ENCODE measurements at regions of chr2 and their contacts with region 1.

Region 1: DNA sequence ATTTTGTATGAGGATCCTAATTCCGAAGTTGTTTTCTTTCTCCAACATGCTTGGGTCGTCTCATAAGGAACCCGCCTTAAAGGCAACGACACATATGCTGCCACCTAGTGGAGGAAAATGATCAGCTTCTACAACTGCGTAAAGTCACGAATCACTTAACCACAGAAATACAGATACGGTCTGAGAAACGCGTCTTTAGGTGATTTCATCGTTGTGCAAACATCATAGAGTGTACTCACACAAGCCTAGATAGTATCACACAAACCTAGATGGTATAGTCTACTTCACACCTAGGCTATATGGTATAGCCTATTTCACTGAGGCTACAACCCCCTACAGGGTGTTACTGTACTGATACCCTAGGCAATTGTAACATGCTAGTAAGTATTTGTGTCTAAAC is 13.1 kb downstream of the GNLY start:
- DNase-seq: peak; percentile 90
- ATAC-seq: peak; percentile 71
- H3K4me3 ChIP-seq: no peak overlapping the region
- H3K4me3 Mint-ChIP-seq: peak overlapping the region; percentile 40
- H3K27ac ChIP-seq: no peak overlapping the region
- H3K27ac Mint-ChIP-seq: peak overlapping the region; percentile 38
- H3K4me1 ChIP-seq: peaks cover 39 to 44% of the 10 kb centered on the region in 2 donors
- H3K4me1 Mint-ChIP-seq: peaks cover 39% of the 10 kb centered on the region
- H3K27me3 ChIP-seq: peaks cover 0 to 9% (median 0%) of the 10 kb centered on the region in 4 experiments
- H3K27me3 Mint-ChIP-seq: peaks cover 16% of the 10 kb centered on the region
- CTCF ChIP-seq: peak; percentile 94

Region 2: DNA sequence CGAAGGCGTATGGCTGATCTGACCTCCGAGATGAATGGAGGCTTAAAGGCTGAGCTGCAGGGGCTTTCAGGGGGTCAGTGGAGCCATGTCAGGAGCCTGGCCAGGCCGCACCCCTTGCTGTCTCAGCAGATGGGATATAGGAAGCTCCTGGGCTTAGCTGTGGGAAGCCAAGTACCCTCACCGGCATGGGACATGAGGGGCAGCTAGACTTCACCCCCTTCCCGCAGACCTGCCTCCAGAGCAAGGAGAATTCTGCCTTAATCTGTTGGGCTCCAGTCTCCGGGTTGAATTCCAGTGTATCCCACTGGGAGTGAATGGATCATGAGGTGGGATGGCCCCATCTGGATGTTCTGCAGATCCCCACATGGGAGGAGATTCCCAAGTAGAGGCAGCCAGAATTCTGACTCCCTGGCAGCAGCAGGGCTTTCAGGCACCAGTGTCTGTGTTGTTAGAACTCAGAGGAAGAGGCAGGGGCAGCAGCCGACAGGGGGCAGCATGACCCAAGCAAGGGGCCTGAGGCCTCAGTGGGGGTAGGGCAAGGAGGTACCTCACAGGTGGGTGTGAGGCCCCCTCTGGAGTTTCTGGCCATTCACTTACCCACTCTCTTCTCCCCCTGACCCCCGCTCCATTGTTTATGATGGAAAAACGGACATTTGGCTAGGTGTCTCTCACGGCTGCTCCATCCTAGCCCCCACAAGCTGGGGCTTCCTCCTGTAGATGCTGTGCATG is 316.2 kb before region 1 on chr2:
- CTCF ChIA-PET with region 1: no interaction called
- POLR2A ChIA-PET with region 1: no interaction called
- intact Hi-C with region 1: loop called (anchors 1 kb)
- DNase-seq: peak; percentile 80
- ATAC-seq: peak; percentile 25
- H3K4me3 ChIP-seq: no peak overlapping the region
- H3K4me3 Mint-ChIP-seq: peak overlapping the region; percentile 15
- H3K27ac ChIP-seq: peak overlapping the region; percentile 68 to 81
- H3K27ac Mint-ChIP-seq: peak overlapping the region; percentile 71
- H3K4me1 ChIP-seq: peaks cover 25 to 26% of the 10 kb centered on the region in 2 donors
- H3K4me1 Mint-ChIP-seq: peaks cover 31% of the 10 kb centered on the region
- H3K27me3 ChIP-seq: no peaks in the 10 kb centered on the region
- H3K27me3 Mint-ChIP-seq: no peaks in the 10 kb centered on the region
- CTCF ChIP-seq: peak; percentile 81

Region 3: DNA sequence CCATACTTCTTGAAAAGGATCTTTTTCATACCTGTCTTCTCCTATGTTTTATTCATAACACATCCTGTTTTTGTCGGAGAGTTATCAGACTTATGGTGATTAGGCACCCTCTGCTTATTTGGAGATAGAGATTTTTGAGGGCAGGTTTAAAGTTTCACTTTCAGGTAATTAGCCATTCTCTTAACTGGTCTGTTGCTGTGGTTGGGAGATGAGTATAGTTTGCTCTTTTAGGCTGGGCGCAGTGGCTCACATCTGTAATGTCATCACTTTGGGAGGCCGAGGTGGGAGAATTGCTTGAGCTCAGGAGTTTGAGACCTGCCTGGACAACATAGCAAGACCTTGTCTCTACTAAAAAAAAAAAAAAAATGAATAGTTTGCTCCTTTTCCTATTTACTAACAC is 64.6 kb before region 1 on chr2:
- CTCF ChIA-PET with region 1: interaction called, 134 read pairs
- POLR2A ChIA-PET with region 1: no interaction called
- intact Hi-C with region 1: no loop called
- DNase-seq: no peak
- ATAC-seq: no peak
- H3K4me3 ChIP-seq: no peak overlapping the region
- H3K4me3 Mint-ChIP-seq: no peak overlapping the region
- H3K27ac ChIP-seq: no peak overlapping the region
- H3K27ac Mint-ChIP-seq: no peak overlapping the region
- H3K4me1 ChIP-seq: peaks cover 6 to 9% of the 10 kb centered on the region in 2 donors
- H3K4me1 Mint-ChIP-seq: peaks cover 5% of the 10 kb centered on the region
- H3K27me3 ChIP-seq: no peaks in the 10 kb centered on the region
- H3K27me3 Mint-ChIP-seq: no peaks in the 10 kb centered on the region
- CTCF ChIP-seq: no peak

Region 4: GRCh38 chr2:85678794-85679672 is 28.3 kb before region 1 on chr2:
- CTCF ChIA-PET with region 1: interaction called, 75 read pairs
- POLR2A ChIA-PET with region 1: no interaction called
- intact Hi-C with region 1: loop called (anchors 1 kb)
- DNase-seq: peak; percentile 82
- ATAC-seq: peak; percentile 99
- H3K4me3 ChIP-seq: no peak overlapping the region
- H3K4me3 Mint-ChIP-seq: peak overlapping the region; percentile 18
- H3K27ac ChIP-seq: no peak overlapping the region
- H3K27ac Mint-ChIP-seq: no peak overlapping the region
- H3K4me1 ChIP-seq: peaks cover 0 to 7% of the 10 kb centered on the region in 2 donors
- H3K4me1 Mint-ChIP-seq: peaks cover 7% of the 10 kb centered on the region
- H3K27me3 ChIP-seq: peaks cover 0 to 17% (median 6%) of the 10 kb centered on the region in 4 experiments
- H3K27me3 Mint-ChIP-seq: peaks cover 24% of the 10 kb centered on the region
- CTCF ChIP-seq: peak; percentile 99

Region 5: DNA sequence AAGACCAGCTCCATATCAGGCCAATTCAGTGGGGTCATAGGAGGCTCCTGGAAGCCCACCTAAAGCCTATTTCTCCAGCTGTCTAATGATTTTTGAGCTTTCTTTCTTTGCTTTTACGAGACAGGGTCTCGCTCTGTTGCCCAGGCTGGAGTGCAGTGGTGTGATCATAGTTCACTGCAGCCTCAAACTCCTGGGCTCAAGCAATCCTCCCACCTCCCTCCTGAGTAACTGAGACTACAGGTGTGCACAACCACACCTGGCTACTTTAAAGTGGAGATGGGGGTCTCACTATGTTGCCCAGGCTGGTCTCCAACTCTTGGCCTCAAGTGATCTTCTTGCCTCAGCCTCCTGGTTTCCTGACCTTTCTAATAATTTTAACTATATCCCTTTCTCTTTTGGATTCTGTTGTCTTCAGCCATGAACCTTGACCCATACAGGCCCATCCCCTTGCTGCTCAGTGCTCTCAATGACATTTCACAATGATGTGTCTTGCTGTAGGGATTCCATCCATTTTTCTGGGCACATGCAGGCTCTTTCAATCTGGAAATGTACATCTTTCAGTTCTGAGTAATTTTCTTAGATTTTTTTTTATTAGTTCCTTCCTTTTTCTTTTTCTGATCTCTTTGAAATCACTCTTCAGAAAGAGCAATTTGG is 16.5 kb after region 1 on chr2:
- CTCF ChIA-PET with region 1: interaction called, 15 read pairs
- POLR2A ChIA-PET with region 1: no interaction called
- intact Hi-C with region 1: no loop called
- DNase-seq: no peak
- ATAC-seq: no peak
- H3K4me3 ChIP-seq: no peak overlapping the region
- H3K4me3 Mint-ChIP-seq: no peak overlapping the region
- H3K27ac ChIP-seq: no peak overlapping the region
- H3K27ac Mint-ChIP-seq: no peak overlapping the region
- H3K4me1 ChIP-seq: peaks cover 2% of the 10 kb centered on the region in 2 donors
- H3K4me1 Mint-ChIP-seq: no peaks in the 10 kb centered on the region
- H3K27me3 ChIP-seq: peaks cover 0 to 8% (median 5%) of the 10 kb centered on the region in 4 experiments
- H3K27me3 Mint-ChIP-seq: peaks cover 23% of the 10 kb centered on the region
- CTCF ChIP-seq: no peak

Region 6: GRCh38 chr2:85797921-85798320 is 90.6 kb after region 1 on chr2:
- CTCF ChIA-PET with region 1: no interaction called
- POLR2A ChIA-PET with region 1: no interaction called
- intact Hi-C with region 1: no loop called
- DNase-seq: no peak
- ATAC-seq: no peak
- H3K4me3 ChIP-seq: no peak overlapping the region
- H3K4me3 Mint-ChIP-seq: no peak overlapping the region
- H3K27ac ChIP-seq: no peak overlapping the region
- H3K27ac Mint-ChIP-seq: no peak overlapping the region
- H3K4me1 ChIP-seq: no peaks in the 10 kb centered on the region
- H3K4me1 Mint-ChIP-seq: no peaks in the 10 kb centered on the region
- H3K27me3 ChIP-seq: peaks cover 0 to 24% (median 6%) of the 10 kb centered on the region in 4 experiments
- H3K27me3 Mint-ChIP-seq: peaks cover 49% of the 10 kb centered on the region
- CTCF ChIP-seq: no peak

Region 7: GRCh38 chr2:85878719-85879385 is 171.5 kb after region 1 on chr2:
- CTCF ChIA-PET with region 1: no interaction called
- POLR2A ChIA-PET with region 1: no interaction called
- intact Hi-C with region 1: no loop called
- DNase-seq: no peak
- ATAC-seq: no peak
- H3K4me3 ChIP-seq: no peak overlapping the region
- H3K4me3 Mint-ChIP-seq: peak overlapping the region; percentile 5
- H3K27ac ChIP-seq: peak overlapping the region in 1 of 2 donors; percentile 27
- H3K27ac Mint-ChIP-seq: peak overlapping the region; percentile 23
- H3K4me1 ChIP-seq: peaks cover 28 to 45% of the 10 kb centered on the region in 2 donors
- H3K4me1 Mint-ChIP-seq: peaks cover 73% of the 10 kb centered on the region
- H3K27me3 ChIP-seq: no peaks in the 10 kb centered on the region
- H3K27me3 Mint-ChIP-seq: no peaks in the 10 kb centered on the region
- CTCF ChIP-seq: no peak